Activated naive CD4-positive, alpha-beta T cell treated with anti-CD3 and anti-CD28 coated beads for 36 hours (primary cell): ENCODE measurements at regions of chr2 and their contacts with region 1.

Region 1: DNA sequence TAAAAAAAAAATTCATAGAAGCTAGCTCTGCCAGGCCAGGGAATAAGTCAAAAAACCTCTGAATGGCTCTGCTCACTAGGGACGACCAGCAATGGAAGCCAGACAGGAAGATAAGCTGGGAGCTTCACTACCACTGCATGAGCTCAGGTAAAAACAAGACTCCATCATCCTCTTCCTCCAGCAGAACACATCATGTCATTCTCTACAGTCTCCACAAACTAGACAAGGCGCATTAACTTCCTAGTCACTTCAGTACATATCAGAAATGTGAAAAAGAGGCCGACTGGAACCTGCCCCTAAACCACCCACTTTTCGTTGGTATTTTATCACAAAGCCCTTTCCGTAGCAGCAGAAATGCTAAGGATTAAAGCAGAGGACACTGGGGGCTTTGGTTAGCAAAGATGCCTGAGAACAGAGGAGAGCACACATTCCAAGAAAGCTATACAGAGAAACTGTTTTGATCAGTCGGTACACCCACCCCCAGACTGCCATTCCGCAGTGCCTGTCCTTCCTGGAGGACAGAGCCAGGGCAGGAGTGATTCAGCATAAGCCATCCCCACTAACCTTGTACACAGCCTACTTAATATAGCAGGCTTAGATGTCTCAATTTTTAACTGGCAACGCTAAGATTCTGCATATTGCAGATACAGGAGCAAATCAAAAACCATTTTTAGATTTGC is 53.4 kb downstream of the AAK1 start:
- DNase-seq: no peak
- H3K4me3 Mint-ChIP-seq: peak overlapping the region; percentile 1
- H3K27ac Mint-ChIP-seq: peak overlapping the region; percentile 68
- H3K4me1 Mint-ChIP-seq: peaks cover 79% of the 10 kb centered on the region
- H3K27me3 Mint-ChIP-seq: no peaks in the 10 kb centered on the region

Region 2: DNA sequence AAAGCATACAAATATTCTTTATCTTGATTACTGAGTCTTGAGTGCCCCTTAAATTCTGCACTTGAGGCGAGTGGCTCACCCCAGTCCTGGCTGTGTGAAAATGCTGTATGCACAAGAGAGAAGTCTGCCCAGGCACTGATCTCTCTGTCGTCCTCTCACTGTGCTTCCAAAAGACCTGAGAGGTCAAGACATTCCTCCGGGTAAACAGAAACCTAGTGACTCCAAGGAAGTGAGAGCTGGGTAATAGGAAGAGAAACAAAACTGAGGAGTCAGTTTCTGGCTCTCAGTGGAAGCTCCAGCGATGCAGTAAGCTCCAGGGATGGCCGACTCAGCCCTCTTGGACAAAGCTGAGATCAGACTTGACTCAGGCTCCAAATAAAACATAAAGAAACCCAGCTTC is 17.5 kb before region 1 on chr2:
- CTCF ChIA-PET with region 1: interaction called, 178 read pairs
- intact Hi-C with region 1: loop called (anchors 2 kb)
- DNase-seq: no peak
- H3K4me3 Mint-ChIP-seq: no peak overlapping the region
- H3K27ac Mint-ChIP-seq: peak overlapping the region; percentile 53
- H3K4me1 Mint-ChIP-seq: peaks cover 73% of the 10 kb centered on the region
- H3K27me3 Mint-ChIP-seq: no peaks in the 10 kb centered on the region